K562 (cell line): ENCODE measurements at regions of chr13 and their contacts with region 1.

Region 1: DNA sequence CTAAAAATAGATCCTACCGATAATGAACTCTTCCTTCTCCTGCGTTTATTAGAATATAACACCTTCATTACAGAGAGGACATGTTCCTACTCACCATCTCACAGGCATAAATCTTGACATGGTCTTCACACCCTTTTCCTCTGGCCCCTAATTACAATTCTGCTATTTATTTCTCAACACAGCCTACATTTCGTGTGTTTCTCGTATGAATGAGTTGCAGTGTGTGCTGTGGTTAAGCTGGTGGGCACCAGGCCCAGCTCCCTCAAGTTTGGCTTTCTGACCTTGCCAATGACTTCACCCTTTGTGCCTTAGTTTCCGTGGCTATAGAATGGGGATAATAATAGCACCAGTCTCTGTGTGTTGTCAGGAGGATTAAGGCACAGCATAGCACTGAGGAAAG is 12.3 kb upstream of the KATNAL1 start:
- DNase-seq: no peak
- ATAC-seq: no peak
- H3K4me3 ChIP-seq: no peak overlapping the region
- H3K27ac ChIP-seq: no peak overlapping the region
- H3K4me1 ChIP-seq: peaks cover 0 to 3% of the 10 kb centered on the region in 2 experiments; a peak in 3 of 5 replicates
- H3K27me3 ChIP-seq: no peaks in the 10 kb centered on the region
- CTCF ChIP-seq: no peak
- EP300 ChIP-seq: no peak
- POLR2A ChIP-seq: no peak
- RAD21 ChIP-seq: no peak

Region 2: GRCh38 chr13:30306762-30307193 is 12.9 kb before region 1 on chr13:
- CTCF ChIA-PET with region 1: no interaction called
- POLR2A ChIA-PET with region 1: interaction called, 16 read pairs
- in situ Hi-C with region 1: no loop called
- intact Hi-C with region 1: no loop called
- DNase-seq: peak; percentile 72 to 93 (median 78)
- ATAC-seq: peak; percentile 88
- H3K4me3 ChIP-seq: peak overlapping the region; percentile 82
- H3K27ac ChIP-seq: peak overlapping the region; percentile 91
- H3K4me1 ChIP-seq: peaks cover 5 to 27% of the 10 kb centered on the region in 2 experiments; a peak in 4 of 5 replicates
- H3K27me3 ChIP-seq: no peaks in the 10 kb centered on the region
- CTCF ChIP-seq: no peak
- EP300 ChIP-seq: no peak
- POLR2A ChIP-seq: no peak
- RAD21 ChIP-seq: no peak